Activated T-helper 1 cell treated with anti-CD3 and anti-CD28 coated beads, Interleukin-12 subunit alpha, Interleukin-12 subunit beta, Interleukin-2, Interleukin-4 antibody, amounts not matched to agents 30 ng/mL and 10 ng/mL and 1 ng/mL, durations not matched to agents 14 hours and 24 hours and 36 hours (primary cell): ENCODE measurements at regions of chr2 and their contacts with region 1.

Region 1: GRCh38 chr2:77161009-77161408 is 361.2 kb downstream of the LRRTM4 start:
- DNase-seq: no peak
- H3K4me3 Mint-ChIP-seq: no peak overlapping the region
- H3K27ac Mint-ChIP-seq: no peak overlapping the region
- H3K4me1 Mint-ChIP-seq: no peaks in the 10 kb centered on the region
- H3K27me3 Mint-ChIP-seq: no peaks in the 10 kb centered on the region

Region 2: GRCh38 chr2:77018219-77018618 is 142.8 kb before region 1 on chr2:
- intact Hi-C with region 1: no loop called
- DNase-seq: no peak
- H3K4me3 Mint-ChIP-seq: no peak overlapping the region
- H3K27ac Mint-ChIP-seq: no peak overlapping the region
- H3K4me1 Mint-ChIP-seq: no peaks in the 10 kb centered on the region
- H3K27me3 Mint-ChIP-seq: no peaks in the 10 kb centered on the region

Region 3: GRCh38 chr2:77179297-77179696 is 18.3 kb after region 1 on chr2:
- intact Hi-C with region 1: loop called (anchors 1 kb)
- DNase-seq: no peak
- H3K4me3 Mint-ChIP-seq: no peak overlapping the region
- H3K27ac Mint-ChIP-seq: no peak overlapping the region
- H3K4me1 Mint-ChIP-seq: no peaks in the 10 kb centered on the region
- H3K27me3 Mint-ChIP-seq: no peaks in the 10 kb centered on the region